CD8-positive, alpha-beta T cell (primary cell): ENCODE measurements at regions of chr2 and their contacts with region 1.

Region 1: GRCh38 chr2:230987137-230988020 is 8.5 kb upstream of the SPATA3 start:
- DNase-seq: peak; percentile 53 to 92 (median 81)
- ATAC-seq: peak; percentile 74
- H3K4me3 ChIP-seq: peak overlapping the region; percentile 49 to 71
- H3K4me3 Mint-ChIP-seq: peak overlapping the region; percentile 59
- H3K27ac ChIP-seq: no peak overlapping the region
- H3K27ac Mint-ChIP-seq: no peak overlapping the region
- H3K4me1 ChIP-seq: peaks cover 10% of the 10 kb centered on the region
- H3K4me1 Mint-ChIP-seq: peaks cover 13% of the 10 kb centered on the region
- H3K27me3 ChIP-seq: no peaks in the 10 kb centered on the region
- H3K27me3 Mint-ChIP-seq: peaks cover 10% of the 10 kb centered on the region
- CTCF ChIP-seq: peak; percentile 90

Region 2: GRCh38 chr2:229748950-229749349 is 1238.4 kb before region 1 on chr2:
- CTCF ChIA-PET with region 1: no interaction called
- POLR2A ChIA-PET with region 1: no interaction called
- intact Hi-C with region 1: no loop called
- DNase-seq: no peak
- ATAC-seq: no peak
- H3K4me3 ChIP-seq: no peak overlapping the region
- H3K4me3 Mint-ChIP-seq: no peak overlapping the region
- H3K27ac ChIP-seq: no peak overlapping the region
- H3K27ac Mint-ChIP-seq: no peak overlapping the region
- H3K4me1 ChIP-seq: no peaks in the 10 kb centered on the region
- H3K4me1 Mint-ChIP-seq: peaks cover 4% of the 10 kb centered on the region
- H3K27me3 ChIP-seq: no peaks in the 10 kb centered on the region
- H3K27me3 Mint-ChIP-seq: no peaks in the 10 kb centered on the region
- CTCF ChIP-seq: no peak

Region 3: DNA sequence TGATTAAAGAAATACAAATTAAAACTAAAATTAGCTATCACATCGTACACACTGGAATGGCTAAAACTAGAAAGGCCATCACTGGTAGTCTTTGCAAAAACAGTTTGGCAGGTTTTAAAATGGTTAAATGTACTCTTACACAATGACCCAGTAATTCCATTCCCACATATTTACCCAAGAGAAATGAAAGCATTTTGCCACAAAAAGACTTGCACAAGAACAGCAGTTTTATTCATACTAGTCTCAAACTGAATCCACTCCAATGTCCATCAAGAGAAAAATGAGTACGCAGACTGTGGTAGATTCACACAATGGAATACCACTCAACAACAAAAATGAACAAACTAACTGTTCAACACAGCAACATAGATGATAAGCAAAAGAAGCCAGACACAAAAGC is 631.3 kb before region 1 on chr2:
- CTCF ChIA-PET with region 1: no interaction called
- POLR2A ChIA-PET with region 1: no interaction called
- intact Hi-C with region 1: no loop called
- DNase-seq: no peak
- ATAC-seq: no peak
- H3K4me3 ChIP-seq: no peak overlapping the region
- H3K4me3 Mint-ChIP-seq: no peak overlapping the region
- H3K27ac ChIP-seq: no peak overlapping the region
- H3K27ac Mint-ChIP-seq: no peak overlapping the region
- H3K4me1 ChIP-seq: no peaks in the 10 kb centered on the region
- H3K4me1 Mint-ChIP-seq: peaks cover 32% of the 10 kb centered on the region
- H3K27me3 ChIP-seq: no peaks in the 10 kb centered on the region
- H3K27me3 Mint-ChIP-seq: no peaks in the 10 kb centered on the region
- CTCF ChIP-seq: no peak

Region 4: GRCh38 chr2:230400454-230400853 is 586.9 kb before region 1 on chr2:
- CTCF ChIA-PET with region 1: no interaction called
- POLR2A ChIA-PET with region 1: no interaction called
- intact Hi-C with region 1: no loop called
- DNase-seq: no peak
- ATAC-seq: no peak
- H3K4me3 ChIP-seq: no peak overlapping the region
- H3K4me3 Mint-ChIP-seq: no peak overlapping the region
- H3K27ac ChIP-seq: no peak overlapping the region
- H3K27ac Mint-ChIP-seq: no peak overlapping the region
- H3K4me1 ChIP-seq: no peaks in the 10 kb centered on the region
- H3K4me1 Mint-ChIP-seq: no peaks in the 10 kb centered on the region
- H3K27me3 ChIP-seq: no peaks in the 10 kb centered on the region
- H3K27me3 Mint-ChIP-seq: no peaks in the 10 kb centered on the region
- CTCF ChIP-seq: no peak

Region 5: DNA sequence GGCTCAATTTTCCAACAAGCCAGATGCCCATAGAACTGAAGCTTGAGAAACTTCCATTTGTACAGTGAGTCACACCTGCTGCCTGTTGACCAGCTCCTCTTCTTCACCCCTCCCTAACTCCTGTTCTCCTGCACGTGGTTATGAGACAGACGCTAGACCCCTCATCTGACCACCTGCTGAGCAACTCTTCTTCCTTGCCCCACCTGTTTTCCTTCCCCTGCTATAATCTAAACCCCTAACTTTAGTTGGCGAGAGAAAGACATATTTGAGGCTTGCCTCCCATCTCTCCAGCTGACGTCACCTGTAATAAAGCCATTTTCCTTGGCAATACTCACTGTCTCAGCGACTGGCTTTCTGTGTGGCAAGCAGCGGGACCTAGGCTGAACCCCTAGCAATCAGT is 144.9 kb before region 1 on chr2:
- CTCF ChIA-PET with region 1: interaction called, 114 read pairs
- POLR2A ChIA-PET with region 1: no interaction called
- intact Hi-C with region 1: no loop called
- DNase-seq: no peak
- ATAC-seq: no peak
- H3K4me3 ChIP-seq: no peak overlapping the region
- H3K4me3 Mint-ChIP-seq: no peak overlapping the region
- H3K27ac ChIP-seq: no peak overlapping the region
- H3K27ac Mint-ChIP-seq: no peak overlapping the region
- H3K4me1 ChIP-seq: peaks cover under 1% of the 10 kb centered on the region
- H3K4me1 Mint-ChIP-seq: peaks cover 4% of the 10 kb centered on the region
- H3K27me3 ChIP-seq: peaks cover 0 to 2% of the 10 kb centered on the region in 2 experiments
- H3K27me3 Mint-ChIP-seq: peaks cover 6% of the 10 kb centered on the region
- CTCF ChIP-seq: no peak

Region 6: DNA sequence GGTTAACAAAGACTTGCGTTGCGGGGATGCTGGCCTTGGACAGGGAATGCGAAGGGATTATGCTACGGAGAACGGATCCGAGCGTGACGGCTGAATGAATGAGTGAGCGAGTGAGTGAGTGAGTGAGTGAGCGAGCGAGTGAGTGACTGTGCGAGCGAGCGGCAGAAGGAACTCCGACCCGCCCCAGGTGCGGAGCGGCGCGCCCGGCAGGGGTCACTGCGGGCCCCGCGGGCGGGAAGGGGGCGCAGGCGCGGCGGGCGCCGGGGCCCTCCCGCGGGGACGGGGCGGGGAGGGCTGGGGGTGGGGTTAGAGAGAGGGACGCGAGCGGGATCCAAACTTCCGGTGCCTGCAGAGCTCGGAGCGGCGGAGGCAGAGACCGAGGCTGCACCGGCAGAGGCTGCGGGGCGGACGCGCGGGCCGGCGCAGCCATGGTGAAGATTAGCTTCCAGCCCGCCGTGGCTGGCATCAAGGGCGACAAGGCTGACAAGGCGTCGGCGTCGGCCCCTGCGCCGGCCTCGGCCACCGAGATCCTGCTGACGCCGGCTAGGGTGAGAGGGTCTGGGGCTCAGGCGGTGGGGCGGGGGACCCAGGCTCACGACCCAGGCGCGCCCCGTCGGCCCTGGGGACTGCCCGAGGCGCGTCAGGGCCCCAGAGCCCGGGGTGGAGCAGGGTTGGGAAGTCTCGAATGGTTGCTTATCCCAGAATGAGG is 122.6 kb before region 1 on chr2 and contains the start of gene ITM2C:
- CTCF ChIA-PET with region 1: interaction called, 20 read pairs
- POLR2A ChIA-PET with region 1: no interaction called
- intact Hi-C with region 1: loop called (anchors 1 kb)
- DNase-seq: peak; percentile 57 to 90 (median 77)
- ATAC-seq: peak; percentile 79
- H3K4me3 ChIP-seq: peak within 1 kb of the TSS; percentile 52 to 65
- H3K4me3 Mint-ChIP-seq: peak within 1 kb of the TSS; percentile 96
- H3K27ac ChIP-seq: peak within 1 kb of the TSS in 1 of 2 experiments; percentile 37
- H3K27ac Mint-ChIP-seq: peak within 1 kb of the TSS; percentile 80
- H3K4me1 ChIP-seq: peaks cover 55% of the 10 kb centered on the region
- H3K4me1 Mint-ChIP-seq: peaks cover 46% of the 10 kb centered on the region
- H3K27me3 ChIP-seq: peaks cover 0 to 5% of the 10 kb centered on the region in 2 experiments
- H3K27me3 Mint-ChIP-seq: no peaks in the 10 kb centered on the region
- CTCF ChIP-seq: peak; percentile 51
- total RNA-seq, gene ITM2C: 23.2 to 27.4 TPM

Region 7: GRCh38 chr2:230913406-230914143 is 73.8 kb before region 1 on chr2:
- CTCF ChIA-PET with region 1: interaction called, 368 read pairs
- POLR2A ChIA-PET with region 1: no interaction called
- intact Hi-C with region 1: no loop called
- DNase-seq: peak in 3 of 9 experiments; percentile 49 to 71 (median 59)
- ATAC-seq: peak; percentile 76
- H3K4me3 ChIP-seq: no peak overlapping the region
- H3K4me3 Mint-ChIP-seq: no peak overlapping the region
- H3K27ac ChIP-seq: no peak overlapping the region
- H3K27ac Mint-ChIP-seq: no peak overlapping the region
- H3K4me1 ChIP-seq: peaks cover 2% of the 10 kb centered on the region
- H3K4me1 Mint-ChIP-seq: peaks cover 38% of the 10 kb centered on the region
- H3K27me3 ChIP-seq: peaks cover 0 to under 1% of the 10 kb centered on the region in 2 experiments
- H3K27me3 Mint-ChIP-seq: peaks cover 2% of the 10 kb centered on the region
- CTCF ChIP-seq: peak; percentile 41

Region 8: GRCh38 chr2:230932556-230933511 is 54.5 kb before region 1 on chr2:
- CTCF ChIA-PET with region 1: interaction called, 24 read pairs
- POLR2A ChIA-PET with region 1: no interaction called
- intact Hi-C with region 1: no loop called
- DNase-seq: peak in 2 of 9 experiments; percentile 8 to 46
- ATAC-seq: no peak
- H3K4me3 ChIP-seq: no peak overlapping the region
- H3K4me3 Mint-ChIP-seq: no peak overlapping the region
- H3K27ac ChIP-seq: no peak overlapping the region
- H3K27ac Mint-ChIP-seq: peak overlapping the region; percentile 6
- H3K4me1 ChIP-seq: no peaks in the 10 kb centered on the region
- H3K4me1 Mint-ChIP-seq: peaks cover 25% of the 10 kb centered on the region
- H3K27me3 ChIP-seq: no peaks in the 10 kb centered on the region
- H3K27me3 Mint-ChIP-seq: no peaks in the 10 kb centered on the region
- CTCF ChIP-seq: no peak

Region 9: GRCh38 chr2:230967113-230967512 is 20.3 kb before region 1 on chr2:
- CTCF ChIA-PET with region 1: interaction called, 44 read pairs
- POLR2A ChIA-PET with region 1: interaction called, 3 read pairs
- intact Hi-C with region 1: no loop called
- DNase-seq: no peak
- ATAC-seq: no peak
- H3K4me3 ChIP-seq: no peak overlapping the region
- H3K4me3 Mint-ChIP-seq: no peak overlapping the region
- H3K27ac ChIP-seq: no peak overlapping the region
- H3K27ac Mint-ChIP-seq: no peak overlapping the region
- H3K4me1 ChIP-seq: no peaks in the 10 kb centered on the region
- H3K4me1 Mint-ChIP-seq: peaks cover 4% of the 10 kb centered on the region
- H3K27me3 ChIP-seq: peaks cover 0 to 2% of the 10 kb centered on the region in 2 experiments
- H3K27me3 Mint-ChIP-seq: no peaks in the 10 kb centered on the region
- CTCF ChIP-seq: no peak

Region 10: DNA sequence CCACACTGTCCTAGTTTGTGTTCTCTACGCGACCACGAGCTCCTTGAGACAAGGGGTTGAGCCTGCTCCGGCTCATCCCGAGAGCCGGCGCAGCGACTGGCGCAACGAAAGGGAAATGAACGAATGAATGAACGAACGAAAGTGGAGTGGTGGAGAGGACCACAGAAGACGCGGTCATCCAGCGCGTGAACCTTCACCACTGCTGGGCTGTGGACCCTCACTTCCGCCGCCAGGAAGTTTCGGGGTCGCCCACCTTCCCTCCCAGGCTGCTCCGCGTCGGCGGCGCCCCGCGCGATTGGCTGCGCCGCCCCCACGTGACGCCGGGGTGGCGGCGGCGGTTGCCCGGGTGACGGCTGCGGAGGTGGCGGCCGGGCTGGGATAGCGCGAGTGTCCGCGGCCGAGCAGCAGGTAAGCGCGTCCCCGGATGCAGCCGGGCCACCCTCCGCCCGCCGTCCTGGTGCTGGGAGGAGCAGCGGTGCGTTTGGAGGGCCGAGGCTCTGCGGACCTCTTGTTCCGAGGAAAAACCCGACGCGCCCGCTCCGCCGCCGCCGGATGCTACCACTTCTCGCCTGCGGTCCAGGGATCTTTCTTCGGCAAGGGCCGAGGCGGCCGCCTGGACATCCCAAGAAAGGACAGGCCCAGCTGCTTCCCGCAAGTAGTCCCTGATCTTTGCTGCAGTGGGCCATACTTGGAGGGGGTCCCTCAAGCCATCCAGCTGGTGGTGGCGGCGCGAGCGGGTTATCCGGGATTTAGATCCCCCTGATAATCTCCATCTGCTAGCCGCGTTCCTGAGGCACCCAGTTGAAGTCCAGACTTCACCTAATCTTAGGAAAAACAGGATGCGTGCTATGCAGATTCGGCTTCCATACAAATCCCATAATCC is 211.2 kb after region 1 on chr2 and contains the start of gene ARMC9:
- CTCF ChIA-PET with region 1: no interaction called
- POLR2A ChIA-PET with region 1: no interaction called
- intact Hi-C with region 1: no loop called
- DNase-seq: peak; percentile 30 to 84 (median 70)
- ATAC-seq: peak; percentile 94
- H3K4me3 ChIP-seq: peak within 1 kb of the TSS; percentile 98
- H3K4me3 Mint-ChIP-seq: peak within 1 kb of the TSS; percentile 92
- H3K27ac ChIP-seq: peak within 1 kb of the TSS; percentile 50 to 56
- H3K27ac Mint-ChIP-seq: peak within 1 kb of the TSS; percentile 60
- H3K4me1 ChIP-seq: peaks cover 9% of the 10 kb centered on the region
- H3K4me1 Mint-ChIP-seq: peaks cover 14% of the 10 kb centered on the region
- H3K27me3 ChIP-seq: no peaks in the 10 kb centered on the region
- H3K27me3 Mint-ChIP-seq: peaks cover 3% of the 10 kb centered on the region
- CTCF ChIP-seq: no peak
- total RNA-seq, gene ARMC9: 1.2 to 1.4 TPM